ENCODE measurements at regions of chr5 and their contacts with region 1.

Region 1: GRCh38 chr5:181005791-181006190 is 17.1 kb downstream of the BTNL3 start:
- DNase-seq: no peak
- H3K4me3 ChIP-seq: no peak overlapping the region
- H3K27ac ChIP-seq: no peak overlapping the region
- H3K4me1 ChIP-seq: no peaks in the 10 kb centered on the region
- H3K27me3 ChIP-seq: peaks cover 0 to 28% (median 0%) of the 10 kb centered on the region in 7 donors
- CTCF ChIP-seq: no peak
- POLR2A ChIP-seq: no peak

Region 2: DNA sequence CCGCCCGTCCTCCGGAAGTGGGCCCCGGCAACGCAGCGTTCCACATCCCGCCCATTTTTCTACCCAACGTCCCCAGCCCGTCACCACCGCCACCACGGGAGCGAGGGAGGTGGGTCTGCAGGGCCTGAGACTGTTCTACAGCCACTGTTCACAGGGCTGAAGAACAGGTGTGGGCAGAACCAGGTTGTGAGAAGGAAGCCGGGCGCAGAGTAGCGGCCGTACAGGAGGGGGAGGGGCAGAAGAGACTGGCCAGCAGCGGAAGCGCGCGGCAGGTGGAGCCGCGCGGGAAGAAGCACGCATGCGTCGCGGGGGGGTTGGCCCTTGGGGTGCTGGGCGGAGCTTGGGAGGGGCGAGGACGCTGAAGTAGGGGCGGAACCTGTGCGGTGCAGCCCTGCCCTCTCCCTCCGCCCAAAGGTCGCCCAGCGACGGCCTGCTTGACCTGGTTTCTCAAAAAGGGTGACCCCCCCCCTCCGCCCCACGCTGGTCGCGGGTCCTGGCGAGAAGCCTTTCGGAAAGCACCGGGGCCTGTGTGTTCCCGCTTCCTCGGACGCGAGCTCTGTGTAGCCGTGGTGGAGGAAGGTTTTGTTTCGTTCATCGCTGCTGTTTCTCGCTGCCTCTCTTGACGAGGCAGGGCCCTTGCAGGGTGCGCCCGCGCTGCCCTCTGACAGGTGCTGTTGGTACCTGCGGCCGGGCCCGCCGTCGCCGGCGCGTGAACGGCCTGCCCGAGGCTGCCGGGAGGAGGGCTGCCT is 195.4 kb before region 1 on chr5:
- intact Hi-C with region 1: no loop called
- DNase-seq: peak; percentile 99
- H3K4me3 ChIP-seq: peak overlapping the region; percentile 53 to 90 (median 62)
- H3K27ac ChIP-seq: peak overlapping the region; percentile 96 to 99 (median 99)
- H3K4me1 ChIP-seq: peaks cover 45 to 93% (median 67%) of the 10 kb centered on the region in 6 donors
- H3K27me3 ChIP-seq: no peaks in the 10 kb centered on the region
- CTCF ChIP-seq: peak in 1 of 11 experiments; percentile 6
- POLR2A ChIP-seq: peak; percentile 22 to 40 (median 33)

Region 3: GRCh38 chr5:180935203-180935602 is 70.6 kb before region 1 on chr5:
- intact Hi-C with region 1: loop called (anchors 5 kb)
- DNase-seq: no peak
- H3K4me3 ChIP-seq: no peak overlapping the region
- H3K27ac ChIP-seq: no peak overlapping the region
- H3K4me1 ChIP-seq: no peaks in the 10 kb centered on the region
- H3K27me3 ChIP-seq: peaks cover 0 to 28% (median 0%) of the 10 kb centered on the region in 7 donors
- CTCF ChIP-seq: no peak
- POLR2A ChIP-seq: no peak

Region 4: DNA sequence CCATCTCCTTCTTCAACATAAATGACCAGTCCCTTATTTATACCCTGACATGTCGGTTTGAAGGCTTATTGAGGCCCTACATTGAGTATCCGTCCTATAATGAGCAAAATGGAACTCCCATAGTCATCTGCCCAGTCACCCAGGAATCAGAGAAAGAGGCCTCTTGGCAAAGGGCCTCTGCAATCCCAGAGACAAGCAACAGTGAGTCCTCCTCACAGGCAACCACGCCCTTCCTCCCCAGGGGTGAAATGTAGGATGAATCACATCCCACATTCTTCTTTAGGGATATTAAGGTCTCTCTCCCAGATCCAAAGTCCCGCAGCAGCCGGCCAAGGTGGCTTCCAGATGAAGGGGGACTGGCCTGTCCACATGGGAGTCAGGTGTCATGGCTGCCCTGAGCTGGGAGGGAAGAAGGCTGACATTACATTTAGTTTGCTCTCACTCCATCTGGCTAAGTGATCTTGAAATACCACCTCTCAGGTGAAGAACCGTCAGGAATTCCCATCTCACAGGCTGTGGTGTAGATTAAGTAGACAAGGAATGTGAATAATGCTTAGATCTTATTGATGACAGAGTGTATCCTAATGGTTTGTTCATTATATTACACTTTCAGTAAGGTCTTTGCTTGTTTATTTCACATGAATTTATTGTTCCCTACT is 55.4 kb before region 1 on chr5:
- intact Hi-C with region 1: loop called (anchors 1 kb)
- DNase-seq: no peak
- H3K4me3 ChIP-seq: no peak overlapping the region
- H3K27ac ChIP-seq: no peak overlapping the region
- H3K4me1 ChIP-seq: no peaks in the 10 kb centered on the region
- H3K27me3 ChIP-seq: no peaks in the 10 kb centered on the region
- CTCF ChIP-seq: no peak
- POLR2A ChIP-seq: no peak

Region 5: GRCh38 chr5:181281077-181281983 is 275.5 kb after region 1 on chr5:
- intact Hi-C with region 1: no loop called
- DNase-seq: peak; percentile 22
- H3K4me3 ChIP-seq: no peak overlapping the region
- H3K27ac ChIP-seq: no peak overlapping the region
- H3K4me1 ChIP-seq: no peaks in the 10 kb centered on the region
- H3K27me3 ChIP-seq: no peaks in the 10 kb centered on the region
- CTCF ChIP-seq: no peak
- POLR2A ChIP-seq: no peak